CD8-positive, alpha-beta memory T cell (primary cell): ENCODE measurements at regions of chr1 and their contacts with region 1.

Region 1: DNA sequence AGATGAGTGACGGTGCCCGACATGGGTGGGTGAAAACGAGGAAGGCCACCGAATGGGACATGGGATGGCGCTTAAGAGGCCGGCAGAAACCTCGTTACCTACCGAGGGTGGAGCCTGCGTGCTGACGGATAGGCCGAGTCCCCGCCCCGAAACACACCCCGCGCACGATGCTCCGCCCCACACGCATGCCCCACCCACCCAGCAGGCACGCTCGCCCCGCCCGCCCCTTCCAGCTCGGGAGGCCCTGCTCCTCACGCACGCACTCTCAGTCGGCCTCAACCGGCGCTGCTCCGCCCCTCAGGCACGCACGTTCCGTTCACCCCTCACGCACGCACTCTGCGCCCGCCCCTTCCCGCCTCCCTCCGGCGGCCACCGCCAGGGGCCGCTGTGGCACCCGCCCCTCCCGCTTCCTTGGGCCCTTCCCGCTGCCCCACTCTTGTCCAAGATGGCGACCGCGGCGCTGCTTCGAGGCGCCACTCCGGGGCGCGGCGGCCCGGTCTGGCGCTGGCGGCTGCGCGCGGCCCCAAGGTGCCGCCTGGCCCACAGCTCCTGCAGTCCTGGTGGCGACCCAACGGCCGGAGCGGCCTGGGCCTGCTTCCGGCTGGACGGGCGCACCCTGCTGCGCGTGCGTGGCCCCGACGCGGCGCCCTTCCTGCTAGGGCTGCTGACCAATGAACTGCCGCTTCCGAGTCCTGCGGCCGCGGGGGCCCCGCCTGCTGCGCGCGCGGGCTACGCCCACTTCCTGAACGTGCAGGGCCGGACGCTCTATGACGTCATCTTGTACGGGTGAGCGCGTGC is at the start of gene IBA57:
- DNase-seq: peak; percentile 99 to 100 (median 100)
- H3K4me3 ChIP-seq: peak within 1 kb of the TSS; percentile 89
- H3K4me3 Mint-ChIP-seq: peak within 1 kb of the TSS; percentile 84 to 95 (median 90)
- H3K27ac ChIP-seq: peak within 1 kb of the TSS; percentile 97
- H3K27ac Mint-ChIP-seq: peak within 1 kb of the TSS; percentile 94 to 99 (median 97)
- H3K4me1 ChIP-seq: peaks cover 35% of the 10 kb centered on the region
- H3K4me1 Mint-ChIP-seq: peaks cover 27 to 65% (median 51%) of the 10 kb centered on the region in 3 donors
- H3K27me3 ChIP-seq: no peaks in the 10 kb centered on the region
- H3K27me3 Mint-ChIP-seq: no peaks in the 10 kb centered on the region
- total RNA-seq, gene IBA57: 12.6 to 13.6 TPM

Region 2: DNA sequence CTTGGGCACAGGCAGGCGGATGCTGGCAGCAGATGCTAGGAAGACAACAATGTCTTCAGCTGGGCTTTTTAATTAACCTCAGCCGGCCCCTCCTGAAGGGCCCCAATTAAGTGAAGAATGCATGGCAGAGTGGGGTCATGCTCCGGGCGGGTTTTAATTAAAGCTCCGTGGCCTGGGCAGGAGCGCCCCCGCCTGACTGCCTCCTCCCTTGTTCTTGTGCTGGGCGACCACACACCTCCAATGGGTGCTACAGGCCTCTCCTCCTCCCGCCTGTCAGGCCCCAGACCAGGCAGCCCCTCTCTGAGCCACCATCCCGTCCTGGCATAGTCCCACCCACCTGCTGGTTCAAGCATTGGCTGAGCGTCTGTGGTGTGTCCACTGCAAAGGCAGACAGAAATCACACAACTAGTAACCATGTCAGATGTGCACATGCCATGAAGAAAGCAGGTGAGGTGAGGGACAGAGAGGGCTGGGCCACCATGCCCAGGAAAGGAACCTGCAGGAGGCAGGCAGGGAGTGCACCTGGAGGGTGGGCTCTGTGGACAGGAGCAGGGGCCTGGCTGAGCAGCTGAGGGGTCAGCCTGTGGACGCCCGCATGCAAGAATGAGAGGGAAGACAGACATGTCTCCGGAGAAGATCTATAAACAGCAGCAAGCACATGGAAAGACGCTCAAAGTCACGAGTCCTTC is 91.6 kb before region 1 on chr1:
- CTCF ChIA-PET with region 1: no interaction called
- POLR2A ChIA-PET with region 1: no interaction called
- DNase-seq: peak in 1 of 5 donors; percentile 37
- H3K4me3 ChIP-seq: no peak overlapping the region
- H3K4me3 Mint-ChIP-seq: no peak overlapping the region
- H3K27ac ChIP-seq: no peak overlapping the region
- H3K27ac Mint-ChIP-seq: peak overlapping the region in 1 of 8 donors; percentile 15
- H3K4me1 ChIP-seq: no peaks in the 10 kb centered on the region
- H3K4me1 Mint-ChIP-seq: peaks cover 0 to 22% (median 4%) of the 10 kb centered on the region in 3 donors
- H3K27me3 ChIP-seq: no peaks in the 10 kb centered on the region
- H3K27me3 Mint-ChIP-seq: no peaks in the 10 kb centered on the region

Region 3: DNA sequence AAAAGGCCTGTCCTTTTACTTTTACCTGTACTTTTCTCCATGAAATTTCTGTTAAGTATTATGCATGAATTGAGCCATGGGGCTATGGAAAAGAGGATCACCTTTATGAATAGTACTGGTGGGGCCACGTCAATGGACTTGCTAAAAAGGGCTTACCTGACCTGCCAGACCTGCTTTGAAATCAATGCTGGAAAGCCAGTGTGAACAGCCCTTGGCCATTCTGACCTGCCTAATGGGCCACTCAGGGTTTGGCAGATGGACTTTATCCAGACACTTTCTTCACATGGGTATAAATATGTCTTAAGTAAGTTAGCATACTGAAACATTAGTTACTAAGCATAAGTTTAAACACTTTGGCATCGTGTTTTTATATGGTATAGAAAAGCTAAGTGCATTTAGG is 33.8 kb before region 1 on chr1:
- CTCF ChIA-PET with region 1: interaction called, 59 read pairs
- POLR2A ChIA-PET with region 1: interaction called, 69 read pairs
- DNase-seq: no peak
- H3K4me3 ChIP-seq: no peak overlapping the region
- H3K4me3 Mint-ChIP-seq: no peak overlapping the region
- H3K27ac ChIP-seq: no peak overlapping the region
- H3K27ac Mint-ChIP-seq: no peak overlapping the region
- H3K4me1 ChIP-seq: no peaks in the 10 kb centered on the region
- H3K4me1 Mint-ChIP-seq: peaks cover 13 to 19% (median 14%) of the 10 kb centered on the region in 3 donors
- H3K27me3 ChIP-seq: no peaks in the 10 kb centered on the region
- H3K27me3 Mint-ChIP-seq: peaks cover 8 to 9% of the 10 kb centered on the region in 2 donors

Region 4: GRCh38 chr1:228139944-228140656 is 25.5 kb before region 1 on chr1 and contains the start of gene GUK1:
- CTCF ChIA-PET with region 1: interaction called, 57 read pairs
- POLR2A ChIA-PET with region 1: interaction called, 69 read pairs
- DNase-seq: peak; percentile 100
- H3K4me3 ChIP-seq: peak within 1 kb of the TSS; percentile 86
- H3K4me3 Mint-ChIP-seq: peak within 1 kb of the TSS; percentile 91 to 99 (median 98)
- H3K27ac ChIP-seq: peak within 1 kb of the TSS; percentile 98
- H3K27ac Mint-ChIP-seq: peak within 1 kb of the TSS; percentile 98 to 100 (median 99)
- H3K4me1 ChIP-seq: peaks cover 50% of the 10 kb centered on the region
- H3K4me1 Mint-ChIP-seq: peaks cover 60 to 75% (median 61%) of the 10 kb centered on the region in 3 donors
- H3K27me3 ChIP-seq: no peaks in the 10 kb centered on the region
- H3K27me3 Mint-ChIP-seq: peaks cover 0 to 4% of the 10 kb centered on the region in 2 donors
- total RNA-seq, gene GUK1: 222 to 245 TPM

Region 5: DNA sequence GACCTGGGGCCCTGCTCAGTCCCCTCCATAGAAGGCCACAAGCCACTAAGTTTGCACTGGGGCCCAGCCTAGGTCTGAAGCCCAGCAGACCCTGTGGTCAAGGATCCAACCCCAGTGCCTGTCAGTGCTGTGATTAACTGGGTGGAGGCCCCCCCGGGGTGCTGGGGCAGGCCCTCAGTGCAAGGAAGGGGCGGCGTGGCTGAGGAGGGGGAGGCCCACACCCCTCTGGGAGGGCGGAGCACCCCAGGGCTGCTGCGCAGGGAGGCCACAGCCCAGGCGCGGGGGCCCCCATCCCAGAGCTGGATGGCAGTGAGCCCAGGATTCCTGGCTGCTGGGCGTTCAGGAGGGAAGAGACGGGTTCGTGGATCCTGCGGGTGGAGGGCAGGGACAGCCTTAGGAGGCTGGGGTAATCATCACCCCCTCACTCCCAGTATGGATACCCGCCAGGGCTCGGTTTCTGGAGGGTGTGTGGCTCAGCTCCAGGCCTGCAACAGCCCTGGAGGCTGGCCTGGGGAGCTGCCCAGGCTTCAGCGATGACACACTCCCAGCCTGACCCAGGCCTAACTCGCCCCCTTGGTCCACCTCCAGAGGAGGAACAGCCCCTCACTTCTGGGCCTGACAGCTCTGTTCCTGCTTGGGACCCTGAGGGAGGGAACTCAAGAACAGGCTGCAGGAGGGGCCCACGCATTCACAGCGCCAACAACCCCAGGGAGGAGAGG is 15.0 kb before region 1 on chr1:
- CTCF ChIA-PET with region 1: interaction called, 11 read pairs
- POLR2A ChIA-PET with region 1: no interaction called
- DNase-seq: peak in 1 of 5 donors; percentile 39
- H3K4me3 ChIP-seq: no peak overlapping the region
- H3K4me3 Mint-ChIP-seq: no peak overlapping the region
- H3K27ac ChIP-seq: no peak overlapping the region
- H3K27ac Mint-ChIP-seq: no peak overlapping the region
- H3K4me1 ChIP-seq: peaks cover 3% of the 10 kb centered on the region
- H3K4me1 Mint-ChIP-seq: peaks cover 2 to 6% (median 2%) of the 10 kb centered on the region in 3 donors
- H3K27me3 ChIP-seq: no peaks in the 10 kb centered on the region
- H3K27me3 Mint-ChIP-seq: no peaks in the 10 kb centered on the region

Region 6: DNA sequence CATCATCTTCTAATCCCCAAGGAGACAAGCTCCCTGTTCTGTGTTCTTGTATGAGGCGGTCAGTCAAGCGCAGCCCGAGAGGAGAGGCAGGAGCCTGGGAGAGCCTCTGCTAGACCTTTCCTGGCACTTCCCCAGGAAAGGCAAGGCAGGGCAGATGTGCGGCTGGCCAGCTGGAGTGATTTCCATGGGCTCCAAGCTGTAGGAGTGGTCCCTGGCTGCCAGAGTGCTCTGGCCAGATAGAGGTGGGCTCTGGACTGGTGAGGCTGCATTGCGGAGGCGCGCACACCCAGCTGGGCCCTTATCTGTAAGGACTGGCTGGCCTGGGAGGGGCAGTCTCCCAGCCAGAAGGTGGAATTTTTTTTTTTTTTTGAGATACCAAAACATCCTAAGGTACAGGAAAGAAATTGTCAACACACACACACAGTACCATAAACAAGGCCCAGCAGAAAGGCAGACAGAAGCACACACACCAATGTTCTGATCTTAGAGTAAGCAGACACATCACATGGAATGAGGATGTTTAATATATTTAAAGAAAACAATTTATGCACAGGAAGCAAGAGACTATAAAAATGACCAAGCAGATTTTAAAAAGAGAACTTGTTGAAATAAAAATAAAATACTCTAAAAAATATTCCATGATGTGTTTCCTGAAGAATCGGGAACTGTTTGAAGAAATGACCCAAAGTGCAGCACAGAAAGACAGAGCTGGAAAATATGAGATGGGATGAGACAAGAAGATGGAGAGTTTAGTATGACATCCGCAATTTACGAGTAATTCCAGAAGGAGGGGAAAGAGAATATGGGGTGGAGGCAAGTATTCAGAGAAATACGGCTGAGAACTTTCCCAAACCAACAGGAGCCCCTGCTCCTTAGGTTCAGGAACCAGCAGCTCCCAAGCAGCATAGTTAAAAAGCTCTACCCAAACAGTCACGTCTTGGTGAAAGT is 13.4 kb after region 1 on chr1:
- CTCF ChIA-PET with region 1: interaction called, 11 read pairs
- POLR2A ChIA-PET with region 1: no interaction called
- DNase-seq: no peak
- H3K4me3 ChIP-seq: no peak overlapping the region
- H3K4me3 Mint-ChIP-seq: peak overlapping the region in 1 of 7 donors; percentile 38
- H3K27ac ChIP-seq: no peak overlapping the region
- H3K27ac Mint-ChIP-seq: peak overlapping the region in 5 of 8 donors; percentile 3 to 46 (median 26)
- H3K4me1 ChIP-seq: no peaks in the 10 kb centered on the region
- H3K4me1 Mint-ChIP-seq: peaks cover 4 to 7% (median 4%) of the 10 kb centered on the region in 3 donors
- H3K27me3 ChIP-seq: no peaks in the 10 kb centered on the region
- H3K27me3 Mint-ChIP-seq: no peaks in the 10 kb centered on the region

Region 7: GRCh38 chr1:228185641-228185965 is 20.0 kb after region 1 on chr1:
- CTCF ChIA-PET with region 1: interaction called, 13 read pairs
- POLR2A ChIA-PET with region 1: no interaction called
- DNase-seq: peak in 4 of 5 donors; percentile 52 to 86 (median 74)
- H3K4me3 ChIP-seq: no peak overlapping the region
- H3K4me3 Mint-ChIP-seq: peak overlapping the region; percentile 27 to 72 (median 65)
- H3K27ac ChIP-seq: peak overlapping the region; percentile 27
- H3K27ac Mint-ChIP-seq: peak overlapping the region; percentile 91 to 97 (median 96)
- H3K4me1 ChIP-seq: peaks cover 19% of the 10 kb centered on the region
- H3K4me1 Mint-ChIP-seq: peaks cover 37 to 49% (median 44%) of the 10 kb centered on the region in 3 donors
- H3K27me3 ChIP-seq: no peaks in the 10 kb centered on the region
- H3K27me3 Mint-ChIP-seq: peaks cover 0 to 1% of the 10 kb centered on the region in 2 donors

Region 8: DNA sequence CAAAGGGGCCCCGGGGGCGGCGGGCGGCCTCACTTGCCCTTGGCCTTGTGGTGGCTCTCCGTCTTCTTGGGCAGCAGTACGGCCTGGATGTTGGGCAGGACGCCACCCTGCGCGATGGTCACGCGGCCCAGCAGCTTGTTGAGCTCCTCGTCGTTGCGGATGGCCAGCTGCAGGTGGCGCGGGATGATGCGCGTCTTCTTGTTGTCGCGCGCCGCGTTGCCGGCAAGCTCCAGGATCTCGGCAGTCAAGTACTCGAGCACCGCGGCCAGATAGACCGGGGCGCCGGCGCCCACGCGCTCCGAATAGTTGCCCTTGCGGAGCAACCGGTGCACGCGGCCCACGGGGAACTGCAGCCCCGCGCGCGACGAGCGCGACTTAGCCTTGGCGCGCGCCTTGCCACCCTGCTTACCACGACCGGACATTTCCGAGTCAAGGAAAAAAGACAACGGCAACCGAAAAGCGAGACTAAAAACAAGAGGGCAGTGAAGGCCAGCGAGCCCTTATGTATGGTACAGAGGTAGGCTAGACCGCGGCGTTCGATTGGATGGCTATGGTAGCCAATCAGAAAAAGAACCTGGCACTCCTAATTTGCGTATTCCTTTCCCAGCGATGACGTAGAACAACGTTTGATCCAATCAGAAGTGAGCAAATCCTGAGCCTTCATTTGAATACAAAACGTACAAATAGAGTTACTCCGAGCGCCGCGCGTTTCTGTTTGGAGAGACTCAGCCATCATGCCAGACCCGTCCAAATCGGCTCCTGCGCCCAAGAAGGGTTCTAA is 292.0 kb after region 1 on chr1:
- CTCF ChIA-PET with region 1: interaction called, 15 read pairs
- POLR2A ChIA-PET with region 1: interaction called, 5 read pairs
- DNase-seq: peak; percentile 70 to 93 (median 87)
- H3K4me3 ChIP-seq: peak overlapping the region; percentile 87
- H3K4me3 Mint-ChIP-seq: peak overlapping the region; percentile 91 to 99 (median 96)
- H3K27ac ChIP-seq: peak overlapping the region; percentile 95
- H3K27ac Mint-ChIP-seq: peak overlapping the region; percentile 98 to 100 (median 99)
- H3K4me1 ChIP-seq: peaks cover 34% of the 10 kb centered on the region
- H3K4me1 Mint-ChIP-seq: peaks cover 41 to 60% (median 53%) of the 10 kb centered on the region in 3 donors
- H3K27me3 ChIP-seq: no peaks in the 10 kb centered on the region
- H3K27me3 Mint-ChIP-seq: peaks cover 0 to 9% of the 10 kb centered on the region in 2 donors